CD4-positive, alpha-beta memory T cell (primary cell): ENCODE measurements at regions of chr13 and their contacts with region 1.

Region 1: DNA sequence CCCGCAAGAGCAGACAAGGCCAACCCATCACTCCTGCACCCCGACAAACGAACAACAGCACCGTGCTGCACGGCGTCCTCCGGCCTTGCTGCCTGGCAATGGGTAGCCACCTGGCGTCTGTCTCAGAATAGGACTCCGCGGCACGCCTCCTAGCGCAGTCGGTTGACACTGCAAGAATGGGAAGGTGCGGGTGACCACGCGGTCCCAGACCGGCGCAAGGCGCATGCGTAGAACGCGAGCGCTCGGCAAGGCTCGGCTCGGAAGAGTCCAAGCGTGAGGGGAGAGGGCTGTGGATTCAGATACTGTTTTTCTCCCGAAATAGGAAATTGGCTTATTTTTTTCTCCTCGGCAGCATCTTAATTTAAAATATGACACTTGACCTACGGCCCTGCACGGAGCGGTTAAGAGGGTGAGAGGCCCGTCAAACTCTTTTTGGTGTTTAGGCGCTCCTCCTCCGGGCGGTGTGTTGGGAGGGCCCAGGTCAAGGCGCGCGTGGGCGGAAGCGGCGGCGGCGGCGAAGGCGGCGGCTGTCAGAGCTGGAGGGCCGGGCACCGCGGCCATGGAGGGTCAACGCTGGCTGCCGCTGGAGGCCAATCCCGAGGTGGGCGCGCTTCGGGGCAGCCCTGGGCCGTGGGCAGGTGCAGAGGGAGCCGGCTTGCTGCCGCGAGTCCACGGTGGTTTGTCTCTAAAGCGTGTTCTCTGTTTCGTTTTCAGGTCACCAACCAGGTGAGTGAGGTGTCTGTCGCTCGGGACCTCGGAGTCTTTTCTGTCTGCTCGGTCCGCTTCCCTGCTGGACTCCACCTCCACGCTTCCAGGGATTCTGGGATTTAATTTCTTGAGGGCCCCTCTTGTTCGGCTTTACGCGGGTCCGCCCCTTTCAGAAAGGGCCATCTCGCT is at the start of gene UCHL3:
- DNase-seq: peak; percentile 95 to 97 (median 97)
- H3K4me3 ChIP-seq: peak within 1 kb of the TSS; percentile 73 to 78
- H3K4me3 Mint-ChIP-seq: peak within 1 kb of the TSS; percentile 93 to 98 (median 97)
- H3K27ac ChIP-seq: peak within 1 kb of the TSS; percentile 83
- H3K27ac Mint-ChIP-seq: peak within 1 kb of the TSS; percentile 94 to 99 (median 99)
- H3K4me1 ChIP-seq: peaks cover 30% of the 10 kb centered on the region
- H3K4me1 Mint-ChIP-seq: peaks cover 26 to 46% (median 36%) of the 10 kb centered on the region in 4 donors
- H3K27me3 ChIP-seq: no peaks in the 10 kb centered on the region
- H3K27me3 Mint-ChIP-seq: no peaks in the 10 kb centered on the region
- total RNA-seq, gene UCHL3: 17.5 to 20.2 TPM

Region 2: GRCh38 chr13:75372517-75372916 is 177.0 kb before region 1 on chr13:
- CTCF ChIA-PET with region 1: interaction called, 10 read pairs
- POLR2A ChIA-PET with region 1: interaction called, 3 read pairs
- intact Hi-C with region 1: loop called (anchors 1 kb)
- DNase-seq: peak in 4 of 5 donors; percentile 31 to 42 (median 36)
- H3K4me3 ChIP-seq: no peak overlapping the region
- H3K4me3 Mint-ChIP-seq: no peak overlapping the region
- H3K27ac ChIP-seq: no peak overlapping the region
- H3K27ac Mint-ChIP-seq: no peak overlapping the region
- H3K4me1 ChIP-seq: no peaks in the 10 kb centered on the region
- H3K4me1 Mint-ChIP-seq: no peaks in the 10 kb centered on the region
- H3K27me3 ChIP-seq: no peaks in the 10 kb centered on the region
- H3K27me3 Mint-ChIP-seq: no peaks in the 10 kb centered on the region

Region 3: DNA sequence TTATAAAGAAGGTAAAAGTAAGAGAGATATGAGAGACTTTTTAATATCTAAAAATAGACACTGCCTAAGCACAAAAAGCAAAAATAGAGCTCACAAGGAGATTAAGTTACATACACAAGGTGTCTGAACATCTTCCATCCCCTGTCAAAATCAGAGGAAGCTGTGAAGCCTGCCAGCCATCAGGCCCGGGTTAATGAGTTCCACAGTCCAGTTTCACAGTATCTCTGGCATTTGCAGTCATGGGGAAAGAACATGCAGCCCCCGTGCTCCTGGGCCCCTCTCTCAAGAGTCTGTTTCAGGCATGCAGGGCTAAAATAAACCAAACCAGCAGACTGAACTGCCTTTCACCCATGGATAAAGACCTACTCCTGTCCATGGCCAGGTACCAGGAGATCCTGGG is 146.7 kb before region 1 on chr13:
- CTCF ChIA-PET with region 1: no interaction called
- POLR2A ChIA-PET with region 1: no interaction called
- intact Hi-C with region 1: no loop called
- DNase-seq: no peak
- H3K4me3 ChIP-seq: no peak overlapping the region
- H3K4me3 Mint-ChIP-seq: no peak overlapping the region
- H3K27ac ChIP-seq: no peak overlapping the region
- H3K27ac Mint-ChIP-seq: no peak overlapping the region
- H3K4me1 ChIP-seq: no peaks in the 10 kb centered on the region
- H3K4me1 Mint-ChIP-seq: no peaks in the 10 kb centered on the region
- H3K27me3 ChIP-seq: no peaks in the 10 kb centered on the region
- H3K27me3 Mint-ChIP-seq: peaks cover 9 to 16% of the 10 kb centered on the region in 2 donors

Region 4: DNA sequence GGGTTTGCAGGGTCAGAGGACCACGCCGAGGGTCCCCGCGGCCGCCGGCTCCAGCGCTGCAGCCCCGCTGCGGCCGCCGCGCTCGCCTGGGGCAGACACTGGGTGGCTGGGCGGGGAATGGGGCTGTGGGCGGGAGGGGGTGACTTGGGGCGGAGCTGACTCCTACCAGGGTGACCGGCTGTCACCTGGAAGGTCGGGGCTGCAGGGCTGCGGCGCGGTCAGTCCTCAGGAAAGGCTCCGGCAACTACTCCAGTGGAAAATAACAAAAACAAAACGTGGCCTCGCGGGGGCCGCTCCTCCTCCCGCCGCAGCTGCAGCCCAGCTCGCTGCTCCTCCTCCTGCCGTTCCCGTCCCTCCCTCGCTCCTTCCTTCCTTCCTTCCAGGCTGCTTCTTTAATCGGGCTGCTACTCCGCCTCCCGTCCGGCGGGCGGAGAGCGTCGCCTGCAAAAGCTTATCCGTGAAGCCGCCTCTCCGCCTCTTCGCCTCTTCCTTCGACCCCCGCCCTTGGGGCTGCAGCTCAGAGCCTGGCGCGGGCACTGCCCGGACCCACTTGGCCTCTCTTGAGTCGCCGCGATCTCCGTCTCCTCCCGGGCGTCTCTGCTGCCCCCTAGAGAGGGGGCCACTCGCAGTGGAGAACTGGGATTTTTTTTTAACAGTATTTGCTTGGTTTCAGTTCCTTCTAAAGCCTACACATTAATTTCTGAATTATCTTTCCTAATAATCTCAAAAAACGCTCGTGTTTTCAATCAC is 67.3 kb before region 1 on chr13 and contains the start of gene TBC1D4:
- CTCF ChIA-PET with region 1: interaction called, 3 read pairs
- POLR2A ChIA-PET with region 1: no interaction called
- intact Hi-C with region 1: loop called (anchors 1 kb)
- DNase-seq: peak; percentile 25 to 38 (median 29)
- H3K4me3 ChIP-seq: peak within 1 kb of the TSS; percentile 29 to 53
- H3K4me3 Mint-ChIP-seq: peak within 1 kb of the TSS; percentile 92 to 98 (median 94)
- H3K27ac ChIP-seq: no peak within 1 kb of the TSS
- H3K27ac Mint-ChIP-seq: peak within 1 kb of the TSS in 3 of 7 donors; percentile 15 to 64 (median 41)
- H3K4me1 ChIP-seq: peaks cover 12% of the 10 kb centered on the region
- H3K4me1 Mint-ChIP-seq: peaks cover 8 to 19% (median 12%) of the 10 kb centered on the region in 4 donors
- H3K27me3 ChIP-seq: no peaks in the 10 kb centered on the region
- H3K27me3 Mint-ChIP-seq: peaks cover 41 to 52% of the 10 kb centered on the region in 2 donors
- total RNA-seq, gene TBC1D4: 63.5 to 67.2 TPM

Region 5: GRCh38 chr13:75537401-75538365 is 11.8 kb before region 1 on chr13 and contains the start of gene COMMD6:
- CTCF ChIA-PET with region 1: interaction called, 7 read pairs
- POLR2A ChIA-PET with region 1: interaction called, 13 read pairs
- intact Hi-C with region 1: loop called (anchors 1 kb)
- DNase-seq: peak; percentile 66 to 77 (median 69)
- H3K4me3 ChIP-seq: peak within 1 kb of the TSS; percentile 96 to 98
- H3K4me3 Mint-ChIP-seq: peak within 1 kb of the TSS; percentile 93 to 99 (median 96)
- H3K27ac ChIP-seq: peak within 1 kb of the TSS; percentile 78
- H3K27ac Mint-ChIP-seq: peak within 1 kb of the TSS; percentile 80 to 94 (median 92)
- H3K4me1 ChIP-seq: peaks cover 50% of the 10 kb centered on the region
- H3K4me1 Mint-ChIP-seq: peaks cover 25 to 52% (median 40%) of the 10 kb centered on the region in 4 donors
- H3K27me3 ChIP-seq: no peaks in the 10 kb centered on the region
- H3K27me3 Mint-ChIP-seq: no peaks in the 10 kb centered on the region
- total RNA-seq, gene COMMD6: 227 to 254 TPM

Region 6: DNA sequence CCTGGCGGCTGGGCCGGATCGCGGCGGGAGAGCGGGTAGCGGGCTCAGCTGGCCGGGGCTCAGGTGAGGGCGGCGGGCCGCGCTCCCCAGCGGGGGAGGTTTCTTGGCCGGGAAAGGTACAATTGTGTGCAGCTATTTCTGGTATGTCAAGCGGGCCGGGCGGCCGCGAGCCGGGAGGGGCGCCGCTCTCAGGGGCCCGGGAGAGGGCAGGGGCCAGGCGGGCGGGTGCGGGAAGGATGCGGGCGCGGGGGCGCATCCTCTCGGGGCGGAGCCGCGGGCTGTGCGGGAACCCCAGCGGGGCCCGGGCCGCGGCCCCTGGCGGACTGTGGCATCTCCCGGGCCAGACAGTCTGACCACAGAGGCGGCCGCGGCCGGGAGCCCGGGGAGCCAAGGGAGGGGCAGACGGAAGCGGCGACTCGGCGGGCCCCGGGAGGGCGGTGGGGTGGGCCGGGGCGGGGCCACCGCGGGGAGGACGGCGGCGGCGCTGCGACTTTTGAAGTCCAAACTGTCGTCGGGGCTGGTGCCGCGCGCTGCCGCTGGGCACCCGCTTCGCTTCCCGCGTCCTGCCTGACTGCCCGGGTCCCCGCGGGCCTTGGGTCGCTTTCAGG is 86.4 kb after region 1 on chr13 and contains the start of gene LMO7:
- CTCF ChIA-PET with region 1: no interaction called
- POLR2A ChIA-PET with region 1: interaction called, 4 read pairs
- intact Hi-C with region 1: loop called (anchors 1 kb)
- DNase-seq: peak; percentile 51 to 65 (median 55)
- H3K4me3 ChIP-seq: peak within 1 kb of the TSS; percentile 59 to 70
- H3K4me3 Mint-ChIP-seq: peak within 1 kb of the TSS; percentile 82 to 90 (median 86)
- H3K27ac ChIP-seq: peak within 1 kb of the TSS; percentile 31
- H3K27ac Mint-ChIP-seq: peak within 1 kb of the TSS; percentile 47 to 88 (median 74)
- H3K4me1 ChIP-seq: peaks cover 6% of the 10 kb centered on the region
- H3K4me1 Mint-ChIP-seq: peaks cover 12 to 19% (median 14%) of the 10 kb centered on the region in 4 donors
- H3K27me3 ChIP-seq: no peaks in the 10 kb centered on the region
- H3K27me3 Mint-ChIP-seq: peaks cover 0 to 4% of the 10 kb centered on the region in 2 donors
- total RNA-seq, gene LMO7: 25.7 to 29.4 TPM

Region 7: DNA sequence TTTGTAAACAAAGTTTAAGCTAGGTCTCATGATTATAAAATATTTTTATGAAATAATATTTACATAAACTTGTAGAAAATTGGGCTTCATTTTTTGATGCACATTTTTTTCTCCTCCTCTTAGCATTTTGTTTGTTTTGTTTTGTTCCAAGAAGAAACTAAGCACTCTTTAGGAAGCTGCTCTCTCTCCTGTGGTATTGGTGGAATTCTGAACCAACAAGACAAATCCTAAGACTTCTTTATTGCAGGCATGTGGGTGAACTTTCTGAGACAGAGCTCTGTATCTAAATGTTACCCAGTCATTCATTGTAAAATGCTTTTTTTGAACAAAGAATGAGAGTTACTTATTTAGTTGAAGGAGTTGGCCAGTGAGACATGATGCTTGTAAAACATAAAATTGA is 125.9 kb after region 1 on chr13:
- CTCF ChIA-PET with region 1: no interaction called
- POLR2A ChIA-PET with region 1: no interaction called
- intact Hi-C with region 1: no loop called
- DNase-seq: no peak
- H3K4me3 ChIP-seq: no peak overlapping the region
- H3K4me3 Mint-ChIP-seq: no peak overlapping the region
- H3K27ac ChIP-seq: no peak overlapping the region
- H3K27ac Mint-ChIP-seq: no peak overlapping the region
- H3K4me1 ChIP-seq: no peaks in the 10 kb centered on the region
- H3K4me1 Mint-ChIP-seq: no peaks in the 10 kb centered on the region
- H3K27me3 ChIP-seq: no peaks in the 10 kb centered on the region
- H3K27me3 Mint-ChIP-seq: no peaks in the 10 kb centered on the region

Region 8: DNA sequence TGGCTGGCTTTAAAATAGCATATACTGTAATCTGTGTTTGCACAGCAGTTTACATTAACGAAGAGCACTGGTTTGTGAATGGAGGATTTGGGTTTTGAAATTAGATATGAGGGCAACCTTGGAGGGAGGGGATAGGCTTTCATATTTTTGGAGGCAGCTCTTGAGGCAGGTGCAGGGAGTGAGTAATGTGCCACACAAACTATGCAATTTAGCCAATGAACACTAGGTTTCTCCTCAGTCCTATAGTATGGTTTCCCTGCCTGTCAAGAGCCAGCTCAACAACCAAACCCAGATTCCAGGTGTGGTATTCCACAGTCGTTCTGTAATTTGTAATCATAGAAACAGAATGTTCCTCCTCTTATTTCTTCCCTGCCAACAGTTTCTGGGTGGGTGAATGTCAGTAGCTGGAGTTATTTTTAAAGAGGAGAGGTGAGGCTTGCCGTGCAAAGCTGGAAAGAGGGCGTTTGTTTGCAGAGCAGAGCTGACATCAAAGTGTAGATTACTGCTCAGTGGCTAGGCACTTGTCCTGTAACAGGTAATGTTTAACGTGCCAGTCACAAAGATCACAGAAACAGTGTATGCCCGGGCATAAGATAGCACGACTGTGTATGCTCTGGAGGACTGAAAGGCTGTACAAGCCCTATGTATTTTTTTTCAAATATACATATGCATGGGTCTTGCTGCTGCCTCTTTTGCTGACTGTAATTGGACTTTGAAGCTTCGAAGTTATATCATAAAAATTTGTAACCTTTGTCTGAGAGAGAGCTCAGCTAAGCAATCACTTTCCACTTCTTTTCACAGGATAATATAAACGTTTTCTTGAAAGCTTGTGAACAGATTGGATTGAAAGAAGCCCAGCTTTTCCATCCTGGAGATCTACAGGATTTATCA is 210.9 kb after region 1 on chr13:
- CTCF ChIA-PET with region 1: no interaction called
- POLR2A ChIA-PET with region 1: no interaction called
- intact Hi-C with region 1: loop called (anchors 10 kb)
- DNase-seq: peak in 4 of 5 donors; percentile 24 to 29 (median 26)
- H3K4me3 ChIP-seq: peak overlapping the region in 1 of 2 donors; percentile 20
- H3K4me3 Mint-ChIP-seq: peak overlapping the region; percentile 77 to 91 (median 84)
- H3K27ac ChIP-seq: no peak overlapping the region
- H3K27ac Mint-ChIP-seq: peak overlapping the region; percentile 62 to 87 (median 77)
- H3K4me1 ChIP-seq: peaks cover 64% of the 10 kb centered on the region
- H3K4me1 Mint-ChIP-seq: peaks cover 54 to 80% (median 66%) of the 10 kb centered on the region in 4 donors
- H3K27me3 ChIP-seq: no peaks in the 10 kb centered on the region
- H3K27me3 Mint-ChIP-seq: no peaks in the 10 kb centered on the region

Region 9: GRCh38 chr13:75803164-75803611 is 253.7 kb after region 1 on chr13:
- CTCF ChIA-PET with region 1: no interaction called
- POLR2A ChIA-PET with region 1: no interaction called
- intact Hi-C with region 1: no loop called
- DNase-seq: peak in 4 of 5 donors; percentile 26 to 38 (median 32)
- H3K4me3 ChIP-seq: no peak overlapping the region
- H3K4me3 Mint-ChIP-seq: peak overlapping the region in 7 of 8 donors; percentile 0 to 80 (median 34)
- H3K27ac ChIP-seq: no peak overlapping the region
- H3K27ac Mint-ChIP-seq: peak overlapping the region in 6 of 7 donors; percentile 22 to 84 (median 76)
- H3K4me1 ChIP-seq: peaks cover 15% of the 10 kb centered on the region
- H3K4me1 Mint-ChIP-seq: peaks cover 17 to 32% (median 22%) of the 10 kb centered on the region in 4 donors
- H3K27me3 ChIP-seq: no peaks in the 10 kb centered on the region
- H3K27me3 Mint-ChIP-seq: no peaks in the 10 kb centered on the region